Activated T-helper 2 cell treated with anti-CD3 and anti-CD28 coated beads, Interferon-gamma antibody, Interleukin-2, Interleukin-4, amounts not matched to agents 10 μg/mL and 5 μg/mL and 100 μg/mL, durations not matched to agents 14 hours and 24 hours and 36 hours (primary cell): ENCODE measurements at regions of chr2 and their contacts with region 1.

Region 1: DNA sequence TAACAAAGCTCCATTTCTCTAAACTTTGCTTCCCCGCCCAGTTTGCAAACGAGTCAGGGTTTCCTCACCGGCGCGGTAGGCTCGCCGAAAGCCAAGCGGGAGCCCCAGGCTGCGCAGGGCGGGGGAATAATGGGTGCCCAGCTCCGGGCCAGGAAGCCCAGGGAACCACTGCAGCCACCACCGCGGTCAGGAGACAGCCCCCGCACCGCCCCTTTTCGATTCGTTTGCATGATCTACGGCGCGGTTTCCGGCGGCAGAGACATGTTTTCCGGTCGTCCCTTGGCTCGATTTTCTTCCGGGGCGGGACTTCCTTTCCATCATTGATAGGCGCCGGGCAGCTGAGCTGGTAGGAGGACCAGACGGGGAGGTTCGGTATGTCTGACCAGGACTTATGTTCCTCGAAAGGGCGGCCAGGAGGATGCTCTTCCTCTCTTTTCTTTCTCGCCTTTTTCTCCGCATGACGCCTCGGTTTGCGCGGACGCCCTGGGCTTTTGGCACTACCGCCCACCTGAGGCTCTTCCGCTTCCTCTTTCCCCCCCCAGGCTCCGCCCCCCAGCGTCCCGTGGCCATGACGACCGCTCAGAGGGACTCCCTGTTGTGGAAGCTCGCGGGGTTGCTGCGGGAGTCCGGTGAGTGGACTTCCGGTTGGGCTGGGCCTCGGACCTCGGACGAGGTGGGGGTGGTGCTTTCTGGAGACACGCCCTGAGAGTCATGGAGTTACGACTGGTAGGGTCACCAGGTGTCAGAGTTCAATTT is at the start of gene STK11IP:
- DNase-seq: peak; percentile 89
- H3K4me3 Mint-ChIP-seq: peak within 1 kb of the TSS; percentile 93
- H3K27ac Mint-ChIP-seq: peak within 1 kb of the TSS; percentile 90
- H3K4me1 Mint-ChIP-seq: peaks cover 18% of the 10 kb centered on the region
- H3K27me3 Mint-ChIP-seq: no peaks in the 10 kb centered on the region
- total RNA-seq, gene STK11IP: 32.5 and 38.1 TPM in 2 replicates

Region 2: DNA sequence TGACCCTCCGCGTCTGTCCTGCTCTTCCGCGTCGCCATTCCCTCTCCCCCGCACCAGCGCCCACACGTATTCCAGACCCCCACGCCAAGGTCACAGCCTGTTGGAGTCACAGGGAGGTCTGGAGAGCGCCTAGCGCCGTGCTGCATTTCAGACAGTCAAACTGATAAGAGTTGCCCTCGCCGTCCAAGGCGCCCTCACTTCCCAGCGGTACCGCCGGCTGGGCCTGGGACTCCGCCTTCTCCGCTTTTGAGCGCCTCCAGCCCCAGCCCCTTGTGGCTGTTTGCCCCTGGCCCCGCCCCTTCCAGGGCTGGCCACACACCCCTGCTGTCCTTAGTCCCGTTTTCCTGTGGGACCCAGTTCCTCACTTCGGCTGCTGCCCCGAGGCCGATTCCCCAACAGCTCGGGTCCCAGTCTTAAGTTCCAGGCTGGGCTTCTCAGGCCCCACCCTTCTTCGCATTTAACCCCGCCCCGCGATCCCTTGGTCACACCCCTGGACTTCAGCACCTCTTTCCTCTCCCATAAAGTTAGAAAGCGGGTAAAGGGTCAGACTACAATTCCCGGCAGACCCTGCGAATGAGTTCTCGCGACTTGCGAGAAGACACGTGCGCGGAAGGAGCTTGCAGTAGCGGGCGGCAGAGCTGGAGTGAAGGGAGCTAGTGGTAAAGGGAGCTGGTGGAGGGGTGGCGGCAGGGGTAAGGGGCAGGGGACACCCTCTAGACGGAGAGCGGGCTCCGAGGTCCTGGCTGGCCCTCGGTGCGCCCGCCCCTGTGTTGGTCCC is 99.3 kb before region 1 on chr2 and contains the start of gene GMPPA:
- intact Hi-C with region 1: loop called (anchors 1 kb)
- DNase-seq: peak; percentile 95
- H3K4me3 Mint-ChIP-seq: peak within 1 kb of the TSS; percentile 96
- H3K27ac Mint-ChIP-seq: peak within 1 kb of the TSS; percentile 91
- H3K4me1 Mint-ChIP-seq: peaks cover 33% of the 10 kb centered on the region
- H3K27me3 Mint-ChIP-seq: peaks cover 43% of the 10 kb centered on the region
- total RNA-seq, gene GMPPA: 52.0 and 52.9 TPM in 2 replicates

Region 3: DNA sequence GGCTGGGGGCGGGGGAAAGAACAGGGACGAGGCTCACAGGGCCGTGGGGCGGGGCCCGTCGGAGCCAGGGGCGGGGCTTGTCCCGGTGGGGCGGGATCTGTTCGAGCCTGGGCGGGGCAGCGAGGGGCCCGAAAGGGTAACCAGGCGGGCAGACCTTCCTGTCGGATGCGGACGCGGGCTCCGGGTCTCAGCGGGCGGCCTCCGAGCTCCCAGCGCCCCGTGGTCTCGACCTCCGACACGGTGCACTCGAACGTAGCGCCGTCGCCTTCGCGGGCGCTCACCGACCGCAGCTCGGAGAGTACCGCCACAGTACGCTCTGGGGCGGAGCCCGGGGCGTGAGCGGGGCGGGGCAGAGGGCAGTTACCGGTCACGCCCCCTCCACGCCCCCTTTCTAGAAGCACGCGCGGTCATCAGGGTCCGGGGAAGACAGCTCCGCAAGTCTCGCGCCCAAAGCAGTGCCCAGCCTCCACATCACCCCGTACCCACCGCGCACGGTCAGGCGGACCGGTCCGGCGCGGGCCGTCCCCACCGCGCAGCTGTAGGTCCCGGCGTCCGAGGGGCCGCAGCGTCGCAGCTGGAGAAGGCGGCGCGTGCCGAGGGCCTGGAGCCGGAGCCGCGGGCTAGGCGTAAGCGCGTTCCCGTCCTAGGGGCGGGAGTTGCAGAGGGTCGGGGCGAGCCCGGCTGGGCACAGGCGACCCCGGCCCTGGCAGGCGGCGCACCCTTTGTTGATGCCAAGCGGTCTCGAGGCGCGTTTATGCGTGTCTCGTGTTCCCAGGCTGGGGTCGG is 45.2 kb before region 1 on chr2:
- intact Hi-C with region 1: loop called (anchors 1 kb)
- DNase-seq: peak; percentile 75
- H3K4me3 Mint-ChIP-seq: peak overlapping the region; percentile 77
- H3K27ac Mint-ChIP-seq: no peak overlapping the region
- H3K4me1 Mint-ChIP-seq: peaks cover 2% of the 10 kb centered on the region
- H3K27me3 Mint-ChIP-seq: peaks cover 19% of the 10 kb centered on the region

Region 4: DNA sequence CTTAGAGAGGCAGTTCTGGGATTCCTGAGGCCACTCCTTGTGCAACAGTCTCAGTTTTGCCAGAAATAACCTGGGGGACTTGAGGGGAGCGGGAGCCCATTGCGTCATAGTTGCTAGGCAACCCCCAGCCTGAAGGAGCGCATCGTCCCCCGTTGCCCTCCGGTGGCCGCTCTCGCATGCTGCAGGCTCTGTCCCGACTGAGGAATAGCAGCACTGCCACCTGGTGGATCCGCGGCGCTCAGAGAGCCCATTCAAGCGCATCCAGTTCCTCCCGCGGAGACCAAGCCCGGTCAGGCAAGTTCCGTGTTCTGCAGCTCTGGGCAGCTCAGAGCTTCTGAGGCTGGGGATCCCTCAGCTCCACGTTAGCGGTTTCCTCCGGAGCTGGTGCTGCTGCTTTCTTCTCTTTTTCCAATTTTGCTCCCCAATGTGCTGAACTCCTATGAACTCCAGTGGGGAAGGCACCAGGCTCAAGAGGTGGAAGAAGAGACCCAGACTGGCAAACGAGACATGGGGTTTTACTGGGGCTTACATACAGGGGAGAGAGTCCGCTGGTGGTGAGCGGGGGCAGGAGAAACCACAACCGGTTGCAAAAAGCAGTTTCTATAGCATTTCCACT is 44.8 kb after region 1 on chr2:
- intact Hi-C with region 1: loop called (anchors 5 kb)
- DNase-seq: peak; percentile 85
- H3K4me3 Mint-ChIP-seq: no peak overlapping the region
- H3K27ac Mint-ChIP-seq: no peak overlapping the region
- H3K4me1 Mint-ChIP-seq: peaks cover 6% of the 10 kb centered on the region
- H3K27me3 Mint-ChIP-seq: peaks cover 7% of the 10 kb centered on the region

Region 5: DNA sequence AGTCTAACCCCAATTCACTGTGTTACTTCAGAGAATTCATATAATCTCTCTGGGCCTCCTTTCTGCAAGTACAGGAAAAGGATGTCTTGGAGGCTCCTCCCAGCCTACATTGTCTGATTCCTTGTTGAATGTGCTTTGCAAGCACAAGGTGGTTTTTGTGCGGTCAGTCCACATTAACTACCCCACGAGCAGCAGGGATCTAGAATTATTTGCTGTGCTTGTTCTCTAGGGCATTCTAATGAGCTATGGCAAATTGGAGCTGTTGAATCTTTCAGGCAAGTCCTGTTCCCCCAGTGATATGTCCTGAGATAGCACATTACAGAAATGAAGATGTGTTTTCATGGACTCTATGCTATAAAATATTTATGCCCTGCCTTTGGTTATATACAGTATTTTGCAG is 379.1 kb after region 1 on chr2:
- intact Hi-C with region 1: no loop called
- DNase-seq: no peak
- H3K4me3 Mint-ChIP-seq: no peak overlapping the region
- H3K27ac Mint-ChIP-seq: no peak overlapping the region
- H3K4me1 Mint-ChIP-seq: no peaks in the 10 kb centered on the region
- H3K27me3 Mint-ChIP-seq: no peaks in the 10 kb centered on the region